RWPE1 (cell line): ENCODE measurements at regions of chr19 and their contacts with region 1.

Region 1: DNA sequence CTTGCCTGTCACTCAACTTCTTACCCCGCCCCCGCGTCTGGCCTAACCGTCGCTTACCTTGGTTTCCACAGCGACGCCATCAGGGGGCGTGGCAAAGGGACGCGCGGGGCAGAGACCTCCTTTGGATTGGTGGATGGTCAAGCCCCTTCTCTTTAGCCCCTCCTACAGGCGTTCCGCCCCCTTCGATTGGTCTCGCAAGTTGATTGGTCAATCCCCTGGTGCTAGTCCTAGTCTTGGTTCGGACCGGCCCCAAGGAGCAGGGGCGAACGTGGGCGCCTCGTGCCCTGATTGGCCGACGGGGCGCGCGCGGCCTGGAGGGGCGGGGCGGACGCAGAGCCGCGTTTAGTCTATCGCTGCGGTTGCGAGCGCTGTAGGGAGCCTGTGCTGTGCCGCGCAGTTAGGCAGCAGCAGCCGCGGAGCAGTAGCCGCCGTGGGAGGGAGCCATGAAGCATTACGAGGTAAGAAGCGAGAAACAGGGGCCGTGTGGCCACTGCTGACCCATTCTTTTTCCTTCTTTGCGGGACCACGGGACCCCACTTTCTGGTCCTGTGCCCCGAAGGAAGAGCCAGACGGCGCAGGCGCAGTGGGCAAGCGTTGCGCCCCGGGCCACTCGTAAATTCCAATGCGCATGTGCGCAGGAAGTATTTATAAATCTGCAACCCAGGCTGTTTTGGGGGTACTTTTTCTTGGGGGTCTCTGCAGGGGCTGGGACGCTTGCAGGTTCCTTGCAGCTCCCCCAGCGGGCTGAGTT is at the start of gene TECR:
- DNase-seq: peak; percentile 99
- H3K27ac ChIP-seq: peak within 1 kb of the TSS; percentile 99
- CTCF ChIP-seq: no peak

Region 2: GRCh38 chr19:14517840-14518505 is 11.5 kb before region 1 on chr19 and contains the start of gene DNAJB1:
- CTCF ChIA-PET with region 1: interaction called, 3 read pairs
- POLR2A ChIA-PET with region 1: interaction called, 13 read pairs
- DNase-seq: peak; percentile 83
- H3K27ac ChIP-seq: peak within 1 kb of the TSS; percentile 100
- CTCF ChIP-seq: no peak

Region 3: GRCh38 chr19:14556662-14557188 is 27.3 kb after region 1 on chr19:
- CTCF ChIA-PET with region 1: interaction called, 10 read pairs
- POLR2A ChIA-PET with region 1: no interaction called
- DNase-seq: peak; percentile 70
- H3K27ac ChIP-seq: peak overlapping the region; percentile 100
- CTCF ChIP-seq: peak; percentile 99

Region 4: GRCh38 chr19:14632279-14632678 is 102.8 kb after region 1 on chr19:
- CTCF ChIA-PET with region 1: no interaction called
- POLR2A ChIA-PET with region 1: no interaction called
- DNase-seq: peak; percentile 81
- H3K27ac ChIP-seq: no peak overlapping the region
- CTCF ChIP-seq: no peak